ENCODE measurements at regions of chr2 and their contacts with region 1.

Region 1: GRCh38 chr2:25342372-25343186 is 854 bp upstream of the DNMT3A start:
- DNase-seq: peak; percentile 67 to 88 (median 77)
- ATAC-seq: peak; percentile 95
- H3K4me3 ChIP-seq: peak overlapping the region; percentile 56
- H3K4me3 Mint-ChIP-seq: peak overlapping the region; percentile 68 to 88 (median 78)
- H3K27ac ChIP-seq: no peak overlapping the region
- H3K27ac Mint-ChIP-seq: peak overlapping the region in 6 of 9 donors; percentile 10 to 89 (median 56)
- H3K4me1 ChIP-seq: peaks cover 5 to 29% of the 10 kb centered on the region in 2 donors
- H3K4me1 Mint-ChIP-seq: peaks cover 18 to 30% (median 27%) of the 10 kb centered on the region in 7 donors
- H3K27me3 ChIP-seq: no peaks in the 10 kb centered on the region
- H3K27me3 Mint-ChIP-seq: no peaks in the 10 kb centered on the region

Region 2: DNA sequence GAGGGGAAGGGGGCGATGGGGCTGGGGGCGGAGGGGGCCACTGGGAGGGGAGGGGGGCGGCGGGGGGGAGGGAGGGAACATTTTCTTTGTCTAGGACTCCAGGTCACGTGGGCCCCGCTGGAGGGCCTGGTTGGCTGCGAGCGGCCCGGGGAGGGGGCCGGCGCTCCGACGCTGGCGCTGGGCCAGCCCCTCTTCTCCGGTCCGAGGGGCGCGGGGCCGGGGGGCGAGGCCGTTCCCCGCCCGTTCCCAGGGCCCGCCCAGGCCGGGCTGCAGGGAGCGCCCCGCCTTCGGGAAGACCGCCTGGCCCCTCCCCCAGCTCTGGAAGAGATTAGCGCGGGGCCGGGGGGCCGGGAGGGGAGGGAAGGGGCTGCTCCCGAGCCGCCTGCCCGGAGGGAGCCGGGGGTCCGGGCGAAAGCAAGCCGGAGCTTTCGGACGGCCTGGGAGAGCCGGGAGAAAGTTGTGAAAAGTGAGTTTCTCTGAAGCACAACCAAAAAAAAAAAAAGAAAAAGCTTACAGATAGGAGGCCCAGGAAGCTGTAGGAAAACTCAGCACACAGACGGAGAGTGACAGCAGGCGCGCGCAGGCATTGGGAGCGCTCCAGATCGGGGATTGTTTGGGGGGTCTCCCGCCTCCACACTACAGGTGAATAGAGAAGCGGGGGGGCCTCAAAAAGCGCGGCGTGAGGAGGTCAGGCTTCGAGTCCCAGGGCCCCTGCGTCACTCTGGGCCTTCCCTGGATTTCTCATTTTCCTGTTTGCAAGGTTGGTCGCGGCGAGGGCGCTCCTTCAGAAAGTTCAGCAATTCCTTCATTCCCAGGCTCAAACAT is 90.1 kb before region 1 on chr2:
- CTCF ChIA-PET with region 1: no interaction called
- POLR2A ChIA-PET with region 1: interaction called, 8 read pairs
- intact Hi-C with region 1: loop called in 1 of 2 experiments (anchors 1 kb)
- DNase-seq: peak; percentile 36 to 67 (median 56)
- ATAC-seq: peak; percentile 77
- H3K4me3 ChIP-seq: peak overlapping the region; percentile 53
- H3K4me3 Mint-ChIP-seq: peak overlapping the region; percentile 82 to 91 (median 90)
- H3K27ac ChIP-seq: peak overlapping the region; percentile 87
- H3K27ac Mint-ChIP-seq: peak overlapping the region; percentile 70 to 93 (median 85)
- H3K4me1 ChIP-seq: peaks cover 6 to 22% of the 10 kb centered on the region in 2 donors
- H3K4me1 Mint-ChIP-seq: peaks cover 26 to 55% (median 45%) of the 10 kb centered on the region in 7 donors
- H3K27me3 ChIP-seq: no peaks in the 10 kb centered on the region
- H3K27me3 Mint-ChIP-seq: no peaks in the 10 kb centered on the region

Region 3: GRCh38 chr2:25301453-25302352 is 40.9 kb before region 1 on chr2:
- CTCF ChIA-PET with region 1: no interaction called
- POLR2A ChIA-PET with region 1: interaction called, 3 read pairs
- intact Hi-C with region 1: loop called in 1 of 2 experiments (anchors 5 kb)
- DNase-seq: peak in 2 of 9 donors; percentile 8 to 77
- ATAC-seq: peak; percentile 84
- H3K4me3 ChIP-seq: peak overlapping the region; percentile 3
- H3K4me3 Mint-ChIP-seq: peak overlapping the region in 3 of 10 donors; percentile 7 to 57 (median 44)
- H3K27ac ChIP-seq: peak overlapping the region; percentile 46
- H3K27ac Mint-ChIP-seq: peak overlapping the region; percentile 51 to 88 (median 74)
- H3K4me1 ChIP-seq: peaks cover 20 to 23% of the 10 kb centered on the region in 2 donors
- H3K4me1 Mint-ChIP-seq: peaks cover 29 to 61% (median 52%) of the 10 kb centered on the region in 7 donors
- H3K27me3 ChIP-seq: no peaks in the 10 kb centered on the region
- H3K27me3 Mint-ChIP-seq: no peaks in the 10 kb centered on the region

Region 4: GRCh38 chr2:25314514-25315315 is 27.9 kb before region 1 on chr2:
- CTCF ChIA-PET with region 1: interaction called, 18 read pairs
- POLR2A ChIA-PET with region 1: interaction called, 6 read pairs
- intact Hi-C with region 1: loop called (anchors 1 kb)
- DNase-seq: peak in 8 of 9 donors; percentile 51 to 90 (median 64)
- ATAC-seq: peak; percentile 79
- H3K4me3 ChIP-seq: peak overlapping the region; percentile 51
- H3K4me3 Mint-ChIP-seq: peak overlapping the region; percentile 61 to 83 (median 81)
- H3K27ac ChIP-seq: peak overlapping the region; percentile 79
- H3K27ac Mint-ChIP-seq: peak overlapping the region; percentile 79 to 97 (median 92)
- H3K4me1 ChIP-seq: peaks cover 34 to 60% of the 10 kb centered on the region in 2 donors
- H3K4me1 Mint-ChIP-seq: peaks cover 36 to 84% (median 70%) of the 10 kb centered on the region in 7 donors
- H3K27me3 ChIP-seq: no peaks in the 10 kb centered on the region
- H3K27me3 Mint-ChIP-seq: no peaks in the 10 kb centered on the region

Region 5: DNA sequence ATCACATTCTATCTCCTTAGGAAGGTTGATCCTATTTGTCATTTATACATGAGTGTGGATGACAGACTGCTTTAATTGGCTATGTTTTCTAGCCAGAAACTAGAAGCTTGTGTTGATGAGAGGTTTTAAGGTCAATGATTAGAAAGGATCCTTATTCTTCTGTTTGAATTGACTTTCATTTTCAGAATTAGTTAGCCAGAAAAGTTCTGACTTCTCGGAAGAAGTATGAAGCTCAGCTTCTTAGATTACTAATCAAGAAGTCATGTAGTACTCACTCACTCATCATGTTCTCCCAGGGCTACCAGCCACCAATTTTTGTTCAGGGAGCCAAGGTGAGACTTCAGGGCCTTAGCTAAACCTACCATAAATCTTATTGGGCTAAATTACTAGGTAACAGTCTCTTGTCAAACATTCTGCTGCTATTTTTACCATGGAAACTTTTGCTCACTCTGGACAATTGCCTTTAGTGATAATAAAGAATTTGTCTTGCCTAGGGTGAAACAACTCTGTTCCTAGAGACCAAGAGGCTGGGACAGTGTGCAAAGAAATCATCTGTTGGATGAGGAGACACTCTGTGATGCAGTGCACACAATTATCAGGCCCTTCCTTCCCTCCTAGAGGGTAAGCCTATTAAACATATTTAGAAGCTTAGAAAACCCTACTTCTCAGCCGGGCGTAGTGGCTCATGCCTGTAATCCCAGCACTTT is 110.8 kb after region 1 on chr2:
- CTCF ChIA-PET with region 1: no interaction called
- POLR2A ChIA-PET with region 1: no interaction called
- intact Hi-C with region 1: no loop called
- DNase-seq: peak in 1 of 9 donors; percentile 33
- ATAC-seq: no peak
- H3K4me3 ChIP-seq: no peak overlapping the region
- H3K4me3 Mint-ChIP-seq: peak overlapping the region in 1 of 10 donors; percentile 81
- H3K27ac ChIP-seq: no peak overlapping the region
- H3K27ac Mint-ChIP-seq: peak overlapping the region in 2 of 9 donors; percentile 30 to 96
- H3K4me1 ChIP-seq: no peaks in the 10 kb centered on the region
- H3K4me1 Mint-ChIP-seq: peaks cover 0 to 38% (median 0%) of the 10 kb centered on the region in 7 donors
- H3K27me3 ChIP-seq: no peaks in the 10 kb centered on the region
- H3K27me3 Mint-ChIP-seq: no peaks in the 10 kb centered on the region

Region 6: GRCh38 chr2:25521665-25522387 is 179.2 kb after region 1 on chr2:
- CTCF ChIA-PET with region 1: no interaction called
- POLR2A ChIA-PET with region 1: no interaction called
- intact Hi-C with region 1: loop called (anchors 1 kb)
- DNase-seq: peak in 7 of 9 donors; percentile 59 to 82 (median 72)
- ATAC-seq: peak; percentile 99
- H3K4me3 ChIP-seq: no peak overlapping the region
- H3K4me3 Mint-ChIP-seq: peak overlapping the region in 8 of 10 donors; percentile 4 to 77 (median 42)
- H3K27ac ChIP-seq: no peak overlapping the region
- H3K27ac Mint-ChIP-seq: peak overlapping the region in 8 of 9 donors; percentile 38 to 88 (median 66)
- H3K4me1 ChIP-seq: peaks cover 4 to 5% of the 10 kb centered on the region in 2 donors
- H3K4me1 Mint-ChIP-seq: peaks cover 0 to 25% (median 8%) of the 10 kb centered on the region in 7 donors
- H3K27me3 ChIP-seq: no peaks in the 10 kb centered on the region
- H3K27me3 Mint-ChIP-seq: no peaks in the 10 kb centered on the region

Region 7: GRCh38 chr2:26251893-26252292 is 909.3 kb after region 1 on chr2:
- CTCF ChIA-PET with region 1: no interaction called
- POLR2A ChIA-PET with region 1: no interaction called
- intact Hi-C with region 1: no loop called
- DNase-seq: no peak
- ATAC-seq: no peak
- H3K4me3 ChIP-seq: no peak overlapping the region
- H3K4me3 Mint-ChIP-seq: peak overlapping the region in 1 of 10 donors; percentile 1
- H3K27ac ChIP-seq: no peak overlapping the region
- H3K27ac Mint-ChIP-seq: peak overlapping the region in 2 of 9 donors; percentile 13 to 32
- H3K4me1 ChIP-seq: peaks cover 0 to 3% of the 10 kb centered on the region in 2 donors
- H3K4me1 Mint-ChIP-seq: peaks cover 18 to 58% (median 44%) of the 10 kb centered on the region in 7 donors
- H3K27me3 ChIP-seq: no peaks in the 10 kb centered on the region
- H3K27me3 Mint-ChIP-seq: no peaks in the 10 kb centered on the region

Measured in naive thymus-derived CD4-positive, alpha-beta T cell (primary cell).